Prostate gland (tissue), 2 donors: ENCODE measurements at regions of chr11 and their contacts with region 1.

Region 1: DNA sequence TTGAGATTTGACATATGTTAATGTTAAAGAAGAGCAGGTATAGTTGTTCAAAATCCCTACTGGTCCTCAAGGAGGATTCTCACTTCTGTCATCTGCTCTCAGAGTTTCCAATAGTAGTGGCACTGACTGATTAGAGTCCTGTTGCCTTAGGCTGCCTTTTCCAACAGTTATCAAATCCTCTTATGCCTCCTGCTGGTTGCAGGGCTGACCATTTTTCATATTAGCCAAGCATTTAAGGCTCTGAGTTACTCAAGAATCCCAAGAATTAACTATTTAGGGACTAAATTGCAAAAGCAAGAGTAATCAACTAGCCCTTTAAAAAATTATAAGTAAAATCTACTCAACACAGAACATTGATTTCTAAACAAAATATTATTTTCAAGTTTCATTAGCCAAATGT is 212.0 kb upstream of the CHORDC1 start:
- DNase-seq: peak; percentile 20
- H3K4me3 ChIP-seq: no peak overlapping the region
- H3K27ac ChIP-seq: no peak overlapping the region
- H3K4me1 ChIP-seq: no peaks in the 10 kb centered on the region
- H3K27me3 ChIP-seq: no peaks in the 10 kb centered on the region
- CTCF ChIP-seq: peak in 3 of 4 experiments; percentile 20 to 51 (median 49)
- POLR2A ChIP-seq: no peak

Region 2: DNA sequence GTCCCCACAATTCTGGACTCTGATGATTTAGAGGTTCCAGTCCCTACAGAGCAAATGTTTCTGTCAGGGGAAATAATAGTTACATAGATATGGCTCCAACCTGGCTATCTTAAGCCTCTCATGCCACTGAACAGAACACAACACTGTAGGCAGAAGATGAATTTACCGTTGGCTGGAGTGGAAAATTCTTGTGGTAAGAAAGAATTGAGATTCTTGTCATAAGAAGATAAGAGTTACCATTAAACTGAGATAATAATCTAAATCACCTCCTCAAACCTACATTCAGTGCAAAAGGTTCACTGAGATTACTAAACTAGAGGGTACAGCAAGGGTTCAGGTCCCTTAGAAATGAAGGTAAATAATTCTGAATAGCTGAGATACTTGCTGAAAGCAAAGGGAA is 310.5 kb before region 1 on chr11:
- intact Hi-C with region 1: no loop called
- DNase-seq: no peak
- H3K4me3 ChIP-seq: no peak overlapping the region
- H3K27ac ChIP-seq: no peak overlapping the region
- H3K4me1 ChIP-seq: no peaks in the 10 kb centered on the region
- H3K27me3 ChIP-seq: no peaks in the 10 kb centered on the region
- CTCF ChIP-seq: no peak
- POLR2A ChIP-seq: no peak

Region 3: DNA sequence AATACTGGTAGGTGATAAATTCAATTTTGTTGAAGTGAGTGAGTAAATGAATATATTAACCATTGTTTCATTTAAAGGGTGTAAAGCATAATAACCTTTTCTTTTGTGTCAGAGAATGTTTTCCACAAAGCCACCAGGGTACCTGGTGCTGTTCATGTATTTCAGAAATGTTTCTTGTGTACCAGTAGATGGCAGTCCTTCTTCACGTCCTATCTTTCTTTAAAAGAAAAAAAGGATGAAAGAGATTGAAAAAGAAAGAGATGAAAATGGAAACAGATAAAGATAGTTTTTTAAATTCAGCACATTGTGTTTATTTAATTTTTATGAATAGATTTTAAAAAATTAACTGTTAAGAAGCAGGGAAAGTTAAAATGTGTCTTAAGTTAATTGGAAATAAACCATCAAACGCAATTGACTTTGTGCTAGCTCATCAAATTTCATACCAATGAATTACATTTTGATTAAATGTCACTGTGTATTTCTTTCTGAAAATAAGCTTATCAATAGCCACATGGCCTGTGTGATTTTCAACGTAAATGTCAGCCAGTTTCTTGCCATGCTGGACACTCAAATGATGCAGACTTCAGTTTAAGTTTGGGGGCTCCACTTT is 146.5 kb before region 1 on chr11:
- intact Hi-C with region 1: loop called (anchors 5 kb)
- DNase-seq: no peak
- H3K4me3 ChIP-seq: no peak overlapping the region
- H3K27ac ChIP-seq: no peak overlapping the region
- H3K4me1 ChIP-seq: no peaks in the 10 kb centered on the region
- H3K27me3 ChIP-seq: no peaks in the 10 kb centered on the region
- CTCF ChIP-seq: peak; percentile 36 to 73 (median 57)
- POLR2A ChIP-seq: no peak